Astrocyte of the cerebellum (primary cell): ENCODE measurements at regions of chr15 and their contacts with region 1.

Region 1: GRCh38 chr15:45705510-45706473 is 71.0 kb downstream of the SQOR start:
- DNase-seq: peak; percentile 75
- H3K4me3 ChIP-seq: peak overlapping the region; percentile 49
- CTCF ChIP-seq: peak; percentile 88

Region 2: DNA sequence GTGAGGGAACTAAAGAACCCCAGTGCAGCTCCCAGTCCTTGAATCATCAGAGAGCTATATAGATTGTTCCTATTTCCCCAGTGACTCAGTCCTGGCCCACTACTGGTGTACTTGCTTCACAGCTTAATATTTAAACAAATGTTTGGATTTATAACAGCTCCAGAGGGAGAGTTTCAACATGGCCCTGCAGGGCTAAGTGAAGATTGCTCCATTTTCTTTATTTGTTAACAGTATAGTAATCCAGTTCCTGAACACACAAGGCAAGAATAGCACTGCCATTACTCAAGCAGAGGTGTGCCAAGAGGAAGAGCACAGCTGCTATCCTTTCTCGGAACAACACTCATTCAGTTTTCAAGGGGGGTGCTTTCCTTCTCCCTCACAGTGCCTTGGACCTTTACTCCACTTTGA is 64.4 kb before region 1 on chr15:
- in situ Hi-C with region 1: loop called (anchors 5 kb)
- DNase-seq: no peak
- H3K4me3 ChIP-seq: no peak overlapping the region
- CTCF ChIP-seq: no peak